Sigmoid colon (tissue), 7 donors: ENCODE measurements at regions of chr5 and their contacts with region 1.

Region 1: DNA sequence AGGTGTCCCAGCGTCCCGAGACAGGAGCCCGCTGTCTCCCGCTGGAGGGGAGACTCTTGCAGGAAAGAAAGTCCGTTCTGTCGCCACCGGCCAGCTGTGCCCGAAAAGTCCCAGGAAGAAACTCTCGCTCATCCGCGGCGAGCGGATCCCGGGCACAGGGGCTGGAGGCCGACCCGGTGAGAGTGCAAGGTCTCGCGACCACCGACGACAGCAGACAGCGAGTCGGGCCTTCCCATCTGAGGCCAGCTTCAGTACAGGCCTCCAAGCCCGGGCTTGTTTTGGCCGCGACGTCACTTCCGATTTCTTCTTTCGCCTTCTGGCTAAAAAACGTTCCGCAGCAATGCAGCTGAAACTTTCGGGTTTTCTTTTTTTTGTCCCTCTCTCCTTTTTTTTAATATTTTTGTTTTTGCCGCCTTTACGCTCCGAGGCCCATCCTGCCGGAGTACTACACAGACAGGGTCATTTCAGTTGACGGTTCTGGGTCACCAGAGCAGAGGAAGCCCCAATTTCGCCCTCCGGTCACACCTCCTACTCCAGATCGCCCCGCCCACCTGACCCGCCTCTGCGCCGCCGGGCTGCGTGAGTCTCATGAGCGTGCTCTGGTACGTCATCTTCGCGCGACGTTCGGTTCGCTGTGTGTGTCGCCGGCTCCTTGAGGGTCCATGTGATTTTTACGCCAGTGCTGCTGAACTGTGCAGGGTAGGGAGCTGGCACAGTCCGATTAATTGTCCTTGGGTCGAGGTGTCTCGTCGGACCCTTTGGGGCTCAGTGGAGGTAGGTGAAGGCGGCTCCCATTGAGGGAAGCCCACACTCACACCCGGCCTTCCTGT is at the starts of genes ANKRA2 and UTP15:
- DNase-seq: peak; percentile 99
- H3K4me3 ChIP-seq: peak within 1 kb of the TSS; percentile 83 to 94 (median 88)
- H3K27ac ChIP-seq: peak within 1 kb of the TSS; percentile 93 to 98 (median 96)
- H3K4me1 ChIP-seq: peaks cover 0 to 35% (median 29%) of the 10 kb centered on the region in 4 donors
- H3K27me3 ChIP-seq: no peaks in the 10 kb centered on the region
- CTCF ChIP-seq: no peak
- EP300 ChIP-seq: peak in 2 of 4 donors; percentile 3 to 73
- POLR2A ChIP-seq: no peak
- total RNA-seq, gene ANKRA2: 17.2 to 33.5 (median 24.6) TPM
- total RNA-seq, gene UTP15: 14.4 to 27.8 (median 16.3) TPM

Region 2: DNA sequence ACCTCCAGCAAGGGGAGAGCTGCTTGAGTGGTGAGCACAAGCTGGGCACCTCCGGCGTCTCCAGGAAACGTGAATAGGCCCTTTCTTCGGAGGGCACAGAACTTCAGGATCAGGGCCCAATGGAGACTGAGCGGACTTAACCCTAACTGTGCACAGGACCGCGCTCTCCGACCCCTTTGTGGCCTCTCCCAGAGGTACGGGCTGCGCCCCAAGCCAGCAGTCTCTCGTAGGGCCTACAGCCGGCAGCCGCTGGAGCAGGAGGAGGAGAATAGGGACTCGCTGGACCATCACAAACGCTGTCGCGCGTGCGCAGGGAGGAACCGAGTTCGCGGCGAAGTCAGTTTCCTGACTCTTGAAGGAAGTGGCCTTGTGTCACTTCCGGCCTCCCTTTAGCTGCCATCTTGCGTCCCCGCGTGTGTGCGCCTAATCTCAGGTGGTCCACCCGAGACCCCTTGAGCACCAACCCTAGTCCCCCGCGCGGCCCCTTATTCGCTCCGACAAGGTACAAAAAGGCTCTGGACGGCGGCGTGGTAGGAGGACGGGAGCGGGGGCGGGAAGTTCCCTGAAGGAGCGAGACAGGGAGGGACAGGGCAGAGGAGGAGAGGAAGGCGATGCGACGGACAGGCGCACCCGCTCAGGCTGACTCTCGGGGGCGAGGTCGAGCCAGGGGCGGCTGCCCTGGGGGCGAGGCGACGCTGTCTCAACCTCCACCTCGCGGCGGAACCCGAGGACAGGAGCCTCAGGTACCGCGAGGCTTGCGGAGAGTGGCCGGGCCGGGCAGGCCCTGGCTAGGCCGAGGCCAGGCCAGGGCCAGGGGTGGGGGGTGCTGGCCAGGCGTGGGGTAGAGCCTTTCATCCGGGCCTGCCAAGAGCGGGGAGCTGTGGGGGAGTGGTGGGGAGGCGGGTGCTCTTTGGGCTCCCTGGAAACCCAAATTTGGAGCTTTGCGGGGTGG is 67.0 kb before region 1 on chr5 and contains the start of gene BTF3:
- intact Hi-C with region 1: loop called (anchors 2 kb)
- DNase-seq: peak; percentile 97
- H3K4me3 ChIP-seq: peak within 1 kb of the TSS; percentile 64 to 99 (median 88)
- H3K27ac ChIP-seq: peak within 1 kb of the TSS; percentile 87 to 97 (median 92)
- H3K4me1 ChIP-seq: peaks cover 0 to 29% (median 24%) of the 10 kb centered on the region in 4 donors
- H3K27me3 ChIP-seq: no peaks in the 10 kb centered on the region
- CTCF ChIP-seq: no peak
- EP300 ChIP-seq: no peak
- POLR2A ChIP-seq: peak; percentile 66 to 72
- total RNA-seq, gene BTF3: 490 to 780 (median 726) TPM